ENCODE measurements at regions of chr6 and their contacts with region 1.

Region 1: DNA sequence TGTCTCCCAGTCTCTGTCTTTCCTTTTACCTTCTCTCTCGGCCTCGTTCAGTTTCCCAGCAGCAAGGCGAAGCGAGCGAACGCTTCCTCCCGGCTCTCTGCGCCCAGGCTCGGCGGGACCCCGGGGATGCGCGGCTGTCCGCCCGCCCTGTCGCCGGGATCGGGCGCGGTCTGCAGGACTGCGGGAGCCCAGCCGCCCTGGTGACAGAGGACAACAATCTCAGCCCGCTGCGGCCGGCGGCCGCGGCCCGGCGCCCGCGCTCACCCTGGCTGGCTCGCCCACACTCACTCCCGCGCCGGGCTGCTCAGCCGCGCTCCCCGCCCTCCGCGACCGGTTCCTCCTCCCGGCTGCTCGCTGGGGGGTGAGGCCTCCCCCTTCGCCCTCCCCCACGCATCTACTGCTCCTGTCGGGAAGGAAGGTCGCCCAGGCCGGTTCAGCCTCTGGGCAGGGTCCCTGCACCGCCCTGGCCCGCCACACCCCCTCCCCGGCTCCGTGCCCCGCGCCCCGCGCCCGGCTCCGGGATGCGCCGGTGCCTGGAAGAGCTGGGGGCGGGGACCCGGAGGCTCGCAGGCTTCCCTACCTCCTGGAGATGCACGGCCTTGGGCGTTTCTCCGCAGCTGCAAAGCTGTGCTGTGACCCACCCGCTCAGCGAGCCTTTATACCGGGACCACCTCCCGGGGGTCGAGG is 410 bp downstream of the SYNE1 start:
- DNase-seq: peak; percentile 64 to 79 (median 73)
- H3K4me3 ChIP-seq: peak overlapping the region; percentile 84
- H3K27ac ChIP-seq: peak overlapping the region; percentile 71 to 80
- H3K4me1 ChIP-seq: peaks cover 1% of the 10 kb centered on the region
- H3K27me3 ChIP-seq: no peaks in the 10 kb centered on the region
- CTCF ChIP-seq: no peak
- EP300 ChIP-seq: no peak
- POLR2A ChIP-seq: no peak

Region 2: DNA sequence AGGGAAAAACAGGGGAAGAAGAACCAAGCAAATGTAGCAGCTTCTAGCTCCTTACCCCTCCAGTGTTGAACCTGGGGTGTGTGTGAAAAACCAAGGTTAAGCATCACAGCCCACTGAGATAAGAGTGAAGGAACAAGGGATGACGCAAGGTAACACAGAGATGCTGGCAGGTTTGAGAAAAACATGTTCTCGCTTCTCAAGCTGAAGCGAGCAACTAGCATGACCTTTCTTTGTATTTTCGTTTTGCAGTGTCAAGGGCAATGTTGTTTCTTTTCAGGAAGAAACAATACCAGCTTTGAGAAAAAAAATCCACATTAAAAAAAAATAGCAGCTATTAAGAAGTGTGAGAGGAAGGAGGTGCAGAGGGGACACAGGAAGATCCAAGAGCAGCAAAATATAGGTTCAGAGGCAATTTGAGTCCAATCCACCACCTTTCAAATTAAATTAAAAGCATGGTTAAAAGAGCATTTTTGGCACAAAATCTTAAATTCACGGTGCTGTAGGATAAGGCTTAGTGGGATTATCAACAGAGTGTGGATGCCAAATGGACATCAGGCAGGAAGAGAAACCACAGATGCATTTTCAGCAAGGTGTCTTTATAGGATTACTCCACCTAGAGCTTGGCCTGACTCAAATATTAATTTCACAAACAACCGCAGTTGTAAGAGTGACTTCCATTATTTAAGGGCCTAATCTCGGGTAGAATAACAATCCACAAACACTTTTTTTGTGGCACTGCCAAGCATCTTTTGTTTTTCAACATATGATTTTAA is 70.5 kb before region 1 on chr6:
- intact Hi-C with region 1: loop called in 1 of 4 experiments (anchors 5 kb)
- DNase-seq: peak in 4 of 5 donors; percentile 38 to 70 (median 54)
- H3K4me3 ChIP-seq: no peak overlapping the region
- H3K27ac ChIP-seq: peak overlapping the region in 1 of 2 donors; percentile 88
- H3K4me1 ChIP-seq: peaks cover 10% of the 10 kb centered on the region
- H3K27me3 ChIP-seq: no peaks in the 10 kb centered on the region
- CTCF ChIP-seq: no peak
- EP300 ChIP-seq: no peak
- POLR2A ChIP-seq: no peak

Measured in ovary (tissue), 10 donors.